Activated CD8-positive, alpha-beta T cell treated with anti-CD3 and anti-CD28 coated beads for 36 hours (primary cell): ENCODE measurements at regions of chr4 and their contacts with region 1.

Region 1: DNA sequence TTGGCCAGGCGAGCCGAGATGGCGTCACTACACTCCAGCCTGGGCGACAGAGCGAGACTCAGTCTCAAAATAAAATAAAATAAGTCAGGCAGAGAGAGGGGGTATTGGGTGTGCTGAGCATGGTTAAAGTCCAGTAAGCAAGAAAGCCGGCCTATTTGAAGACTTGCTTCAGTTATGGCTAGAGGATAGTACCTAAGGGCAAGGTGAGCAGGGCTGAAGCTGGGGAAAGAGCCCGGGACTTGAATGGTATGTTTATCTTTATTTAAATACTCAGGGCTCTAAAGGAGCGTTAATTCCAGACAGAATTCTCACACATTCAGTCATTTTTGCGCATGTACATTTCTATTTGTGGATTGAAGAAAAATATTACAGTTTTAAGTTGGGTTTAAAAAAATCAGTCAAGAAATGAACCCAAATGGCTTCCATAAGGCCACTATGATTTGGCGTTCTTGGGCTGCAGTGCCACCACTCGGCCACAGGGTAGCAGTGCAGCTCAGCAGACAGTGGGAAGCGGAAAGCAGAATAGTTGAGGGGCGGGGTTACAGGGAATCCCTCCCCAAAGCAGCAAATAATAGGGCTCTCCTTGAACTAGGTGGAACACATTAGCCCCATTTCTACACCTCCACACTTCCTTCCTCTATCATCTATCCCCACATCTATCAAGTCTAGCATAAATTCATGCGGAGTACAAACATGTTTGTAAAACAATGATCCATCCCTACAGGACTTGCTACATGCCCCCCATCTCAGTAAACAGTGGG is 37.2 kb upstream of the SH3D19 start:
- DNase-seq: peak; percentile 87
- ATAC-seq: peak; percentile 100
- H3K4me3 Mint-ChIP-seq: no peak overlapping the region
- H3K27ac Mint-ChIP-seq: no peak overlapping the region
- H3K4me1 Mint-ChIP-seq: peaks cover 2% of the 10 kb centered on the region
- H3K27me3 Mint-ChIP-seq: peaks cover 13% of the 10 kb centered on the region
- CTCF ChIP-seq: peak; percentile 94

Region 2: DNA sequence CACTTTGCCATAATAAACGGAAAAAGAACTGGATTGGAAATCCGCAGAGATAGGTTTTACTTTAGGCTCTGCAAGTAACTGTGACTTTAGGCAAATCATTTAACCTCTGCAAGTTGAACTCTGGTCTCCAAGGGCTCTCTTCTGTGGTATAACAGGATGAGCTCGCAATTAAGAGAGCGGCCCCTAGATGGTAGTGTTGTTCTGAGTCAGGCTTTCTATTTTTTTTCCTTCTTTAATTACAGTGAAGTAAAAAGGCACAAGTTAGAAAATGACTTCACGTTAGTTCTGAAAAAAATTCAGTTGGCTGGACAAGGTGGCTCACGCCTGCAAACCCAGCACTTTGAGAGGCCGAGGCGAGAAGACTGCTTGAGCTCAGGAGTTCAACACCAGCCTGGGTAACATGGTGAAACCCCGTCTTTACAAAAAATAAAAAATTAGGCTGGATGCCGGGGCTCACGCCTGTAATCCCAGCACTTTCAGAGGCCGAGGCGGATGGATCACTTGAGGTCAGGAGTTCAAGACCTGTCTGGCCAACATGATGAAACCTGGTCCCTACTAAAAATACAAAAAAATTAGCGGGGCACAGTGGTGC is 245.1 kb before region 1 on chr4:
- CTCF ChIA-PET with region 1: interaction called, 4 read pairs
- POLR2A ChIA-PET with region 1: no interaction called
- intact Hi-C with region 1: loop called (anchors 5 kb)
- DNase-seq: peak; percentile 73
- ATAC-seq: peak; percentile 79
- H3K4me3 Mint-ChIP-seq: no peak overlapping the region
- H3K27ac Mint-ChIP-seq: no peak overlapping the region
- H3K4me1 Mint-ChIP-seq: peaks cover 5% of the 10 kb centered on the region
- H3K27me3 Mint-ChIP-seq: no peaks in the 10 kb centered on the region
- CTCF ChIP-seq: peak; percentile 74

Region 3: GRCh38 chr4:151218343-151218742 is 144.2 kb before region 1 on chr4:
- CTCF ChIA-PET with region 1: no interaction called
- POLR2A ChIA-PET with region 1: no interaction called
- intact Hi-C with region 1: no loop called
- DNase-seq: no peak
- ATAC-seq: no peak
- H3K4me3 Mint-ChIP-seq: no peak overlapping the region
- H3K27ac Mint-ChIP-seq: no peak overlapping the region
- H3K4me1 Mint-ChIP-seq: no peaks in the 10 kb centered on the region
- H3K27me3 Mint-ChIP-seq: peaks cover 16% of the 10 kb centered on the region
- CTCF ChIP-seq: no peak

Region 4: GRCh38 chr4:151276787-151277562 is 85.6 kb before region 1 on chr4 and contains the start of gene PRSS48:
- CTCF ChIA-PET with region 1: interaction called, 4 read pairs
- POLR2A ChIA-PET with region 1: no interaction called
- intact Hi-C with region 1: loop called (anchors 2 kb)
- DNase-seq: peak; percentile 67
- ATAC-seq: peak; percentile 68
- H3K4me3 Mint-ChIP-seq: no peak within 1 kb of the TSS
- H3K27ac Mint-ChIP-seq: no peak within 1 kb of the TSS
- H3K4me1 Mint-ChIP-seq: no peaks in the 10 kb centered on the region
- H3K27me3 Mint-ChIP-seq: peaks cover 3% of the 10 kb centered on the region
- CTCF ChIP-seq: peak; percentile 67
- total RNA-seq, gene PRSS48: not detected

Region 5: DNA sequence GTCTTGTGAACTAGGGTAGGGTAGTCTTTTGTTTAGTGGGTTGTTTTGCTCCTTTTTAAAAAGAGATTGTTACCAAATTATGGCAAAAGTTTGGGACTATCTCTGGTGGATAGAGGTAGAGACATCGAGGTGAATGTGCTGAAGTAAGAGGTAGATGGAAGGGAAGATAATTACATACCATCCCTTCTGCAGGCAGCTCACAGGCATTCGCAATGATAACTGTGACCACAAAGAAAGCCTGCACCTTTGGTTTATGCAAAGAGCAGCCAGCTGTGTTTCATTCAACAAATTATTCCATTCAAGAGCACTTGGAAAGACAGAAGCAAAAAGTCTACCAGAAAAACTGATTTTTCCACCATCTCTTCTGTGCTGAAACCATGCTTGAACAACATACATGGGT is 242.6 kb after region 1 on chr4:
- CTCF ChIA-PET with region 1: no interaction called
- POLR2A ChIA-PET with region 1: no interaction called
- intact Hi-C with region 1: loop called (anchors 5 kb)
- DNase-seq: no peak
- ATAC-seq: no peak
- H3K4me3 Mint-ChIP-seq: no peak overlapping the region
- H3K27ac Mint-ChIP-seq: no peak overlapping the region
- H3K4me1 Mint-ChIP-seq: no peaks in the 10 kb centered on the region
- H3K27me3 Mint-ChIP-seq: peaks cover 3% of the 10 kb centered on the region
- CTCF ChIP-seq: no peak